Activated naive CD4-positive, alpha-beta T cell treated with anti-CD3 and anti-CD28 coated beads, Interleukin-2, amount 10 ng/mL, durations not matched to agents 7 days and 5 days (primary cell): ENCODE measurements at regions of chr7 and their contacts with region 1.

Region 1: GRCh38 chr7:5450549-5451372 is 27.1 kb upstream of the TNRC18 start:
- DNase-seq: peak; percentile 61
- H3K4me3 Mint-ChIP-seq: no peak overlapping the region
- H3K27ac Mint-ChIP-seq: no peak overlapping the region
- H3K4me1 Mint-ChIP-seq: no peaks in the 10 kb centered on the region
- H3K27me3 Mint-ChIP-seq: peaks cover 30% of the 10 kb centered on the region

Region 2: DNA sequence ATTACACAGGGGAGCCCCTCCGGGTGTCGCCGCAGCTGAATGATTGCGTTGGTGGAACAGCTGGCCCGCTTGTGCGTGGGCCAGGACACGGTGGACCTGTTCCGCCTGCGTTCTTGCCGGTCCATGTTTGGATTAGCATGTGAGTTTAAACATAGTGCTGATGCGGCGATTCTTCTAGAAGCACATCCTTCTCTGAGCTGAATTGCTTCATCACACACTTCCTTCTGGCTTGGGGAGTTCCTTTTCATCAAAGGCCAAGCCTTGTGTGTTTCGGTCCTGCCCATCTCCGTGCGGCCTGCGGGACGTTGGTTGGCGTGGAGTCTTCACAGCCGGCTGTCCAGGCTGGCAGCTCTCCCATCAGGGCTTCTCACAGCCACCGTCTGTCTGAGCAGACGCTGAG is 213.5 kb before region 1 on chr7:
- CTCF ChIA-PET with region 1: interaction called, 28 read pairs
- DNase-seq: no peak
- H3K4me3 Mint-ChIP-seq: no peak overlapping the region
- H3K27ac Mint-ChIP-seq: no peak overlapping the region
- H3K4me1 Mint-ChIP-seq: peaks cover 13% of the 10 kb centered on the region
- H3K27me3 Mint-ChIP-seq: peaks cover 56% of the 10 kb centered on the region

Region 3: GRCh38 chr7:5363729-5364128 is 87.0 kb before region 1 on chr7:
- CTCF ChIA-PET with region 1: interaction called, 17 read pairs
- DNase-seq: no peak
- H3K4me3 Mint-ChIP-seq: no peak overlapping the region
- H3K27ac Mint-ChIP-seq: no peak overlapping the region
- H3K4me1 Mint-ChIP-seq: peaks cover 14% of the 10 kb centered on the region
- H3K27me3 Mint-ChIP-seq: no peaks in the 10 kb centered on the region

Region 4: DNA sequence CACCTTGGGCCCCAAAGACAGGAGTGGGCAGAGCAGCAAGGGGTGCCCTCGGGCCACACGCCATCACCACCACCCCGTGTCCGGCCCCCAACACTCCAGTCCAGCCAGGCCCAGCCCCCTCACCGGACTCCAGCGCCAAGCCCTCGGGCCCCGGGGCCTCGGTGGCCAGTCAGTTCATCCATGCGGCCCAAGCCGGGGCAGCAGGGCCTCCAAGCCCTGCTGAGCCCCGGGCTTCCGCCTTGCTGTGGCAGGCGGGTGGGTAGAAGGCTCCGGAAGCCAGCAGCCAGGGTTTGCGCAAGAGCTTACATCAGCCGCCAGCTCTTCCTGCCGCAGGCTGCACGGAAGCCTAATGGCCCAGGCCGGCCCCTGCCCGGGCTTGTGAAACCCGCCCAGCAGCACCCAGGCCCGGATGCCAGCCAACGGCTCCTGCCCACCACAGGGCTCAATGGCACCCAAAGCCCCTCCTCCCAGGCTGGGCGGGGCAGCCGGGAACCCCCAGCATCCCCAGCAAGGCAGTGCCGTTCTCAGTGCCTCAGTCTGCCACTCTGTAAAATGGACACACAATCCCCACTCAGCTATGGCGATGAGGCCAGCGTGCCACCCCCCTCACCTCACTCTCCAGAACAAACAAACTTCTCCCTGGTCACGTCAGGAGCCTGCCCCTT is 53.6 kb before region 1 on chr7:
- CTCF ChIA-PET with region 1: interaction called, 17 read pairs
- DNase-seq: peak; percentile 92
- H3K4me3 Mint-ChIP-seq: peak overlapping the region; percentile 82
- H3K27ac Mint-ChIP-seq: peak overlapping the region; percentile 96
- H3K4me1 Mint-ChIP-seq: peaks cover 54% of the 10 kb centered on the region
- H3K27me3 Mint-ChIP-seq: peaks cover 6% of the 10 kb centered on the region

Region 5: DNA sequence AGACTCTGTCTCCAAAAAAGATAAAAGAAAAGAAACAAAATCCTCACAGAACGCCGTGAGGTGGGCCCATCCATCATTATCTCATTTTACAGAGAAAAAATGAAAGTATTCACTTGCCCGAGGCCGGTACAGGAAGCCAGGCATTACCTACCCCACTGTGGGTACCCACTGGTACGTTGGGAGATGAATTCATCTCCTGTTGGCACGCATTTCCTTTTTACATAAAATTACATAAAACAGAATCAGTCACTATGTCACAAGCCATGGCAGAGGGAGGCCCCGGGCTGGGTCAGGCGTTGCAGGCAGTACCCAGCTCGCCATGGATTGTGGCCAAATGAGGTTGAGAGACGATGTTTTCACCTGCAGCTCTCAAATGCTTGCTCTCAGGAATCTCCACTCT is 11.5 kb after region 1 on chr7:
- CTCF ChIA-PET with region 1: no interaction called
- DNase-seq: no peak
- H3K4me3 Mint-ChIP-seq: no peak overlapping the region
- H3K27ac Mint-ChIP-seq: peak overlapping the region; percentile 7
- H3K4me1 Mint-ChIP-seq: peaks cover 12% of the 10 kb centered on the region
- H3K27me3 Mint-ChIP-seq: peaks cover 12% of the 10 kb centered on the region

Region 6: DNA sequence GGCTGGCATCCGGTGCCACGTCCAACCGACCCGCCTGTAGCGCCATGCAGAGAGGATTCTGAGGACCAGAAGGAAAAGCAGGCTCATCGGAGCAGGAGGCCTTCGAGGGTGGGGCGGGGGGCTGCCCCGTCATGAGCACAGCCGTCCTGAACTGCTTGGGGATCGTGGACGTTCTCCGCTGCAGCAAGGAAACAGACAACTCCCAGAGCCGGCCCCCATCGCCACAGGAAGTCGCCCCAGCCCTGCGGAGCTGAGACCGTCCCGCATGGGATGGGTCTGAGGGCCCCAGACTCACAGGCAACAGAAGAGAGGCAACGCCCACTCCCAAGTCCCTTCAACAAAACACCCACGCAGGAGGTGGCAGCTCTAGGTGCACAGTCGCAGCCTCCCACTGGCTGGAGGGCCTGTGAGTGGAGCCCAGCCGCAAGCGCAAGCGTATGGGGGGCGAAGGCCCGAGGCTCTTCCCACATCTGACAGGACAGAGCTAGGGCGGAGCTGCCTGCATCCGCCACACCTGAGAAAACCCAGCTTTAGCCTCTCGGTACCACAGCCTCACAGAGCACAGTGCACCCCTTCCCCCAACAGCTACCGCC is 37.6 kb after region 1 on chr7:
- CTCF ChIA-PET with region 1: no interaction called
- DNase-seq: peak; percentile 42
- H3K4me3 Mint-ChIP-seq: peak overlapping the region; percentile 44
- H3K27ac Mint-ChIP-seq: peak overlapping the region; percentile 33
- H3K4me1 Mint-ChIP-seq: peaks cover 35% of the 10 kb centered on the region
- H3K27me3 Mint-ChIP-seq: no peaks in the 10 kb centered on the region